ENCODE measurements at regions of chr4 and their contacts with region 1.

Region 1: GRCh38 chr4:125313497-125313896 is 1.3 kb upstream of the FAT4 start:
- DNase-seq: no peak
- ATAC-seq: peak; percentile 26

Region 2: GRCh38 chr4:124980276-124980752 is 333.2 kb before region 1 on chr4:
- intact Hi-C with region 1: no loop called
- DNase-seq: no peak
- ATAC-seq: no peak

Region 3: GRCh38 chr4:125041372-125041930 is 272.0 kb before region 1 on chr4:
- intact Hi-C with region 1: no loop called
- DNase-seq: no peak
- ATAC-seq: no peak

Region 4: DNA sequence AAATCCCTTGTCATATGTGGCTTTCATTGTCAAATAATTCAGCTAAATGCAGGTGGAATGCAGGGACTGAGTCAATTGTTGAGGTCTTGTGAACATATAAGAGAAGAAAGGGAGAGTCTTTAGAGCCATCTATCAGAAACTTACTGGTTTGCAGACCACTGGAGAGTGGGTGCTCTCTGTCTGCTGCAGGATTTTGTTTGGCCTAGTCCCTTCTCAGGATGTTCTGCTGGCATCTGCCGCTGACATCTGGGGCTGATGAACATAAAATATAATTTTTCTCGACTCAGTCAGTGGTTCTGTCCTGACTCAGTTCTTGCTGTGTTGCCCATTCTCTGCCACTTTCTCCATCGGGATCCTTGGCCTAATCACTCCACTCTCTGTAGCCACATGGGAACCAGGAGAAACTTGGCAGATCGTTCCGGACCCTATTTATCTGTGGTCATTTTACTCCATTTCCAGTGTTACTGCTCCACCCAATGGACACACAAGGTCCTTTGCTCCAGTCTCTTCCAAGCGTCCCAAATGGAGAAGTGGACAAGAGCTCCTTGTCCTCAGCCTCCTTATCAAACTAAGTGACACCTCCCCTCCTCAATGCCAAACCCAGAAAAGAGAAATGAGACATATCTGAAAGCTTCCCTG is 437.4 kb after region 1 on chr4:
- intact Hi-C with region 1: loop called (anchors 2 kb)
- DNase-seq: no peak
- ATAC-seq: peak; percentile 87